Endothelial cell of umbilical vein (primary cell): ENCODE measurements at regions of chr1 and their contacts with region 1.

Region 1: GRCh38 chr1:10507111-10507879 is 32.5 kb downstream of the PEX14 start:
- DNase-seq: peak; percentile 49
- H3K4me3 ChIP-seq: no peak overlapping the region
- H3K27ac ChIP-seq: no peak overlapping the region
- H3K4me1 ChIP-seq: peaks cover 28% of the 10 kb centered on the region
- H3K27me3 ChIP-seq: no peaks in the 10 kb centered on the region
- CTCF ChIP-seq: peak; percentile 83 to 88
- POLR2A ChIP-seq: no peak

Region 2: GRCh38 chr1:10494754-10495474 is 12.4 kb before region 1 on chr1:
- CTCF ChIA-PET with region 1: interaction called, 21 read pairs
- POLR2A ChIA-PET with region 1: no interaction called
- dilution Hi-C with region 1: no loop called
- intact Hi-C with region 1: no loop called
- DNase-seq: peak; percentile 59
- H3K4me3 ChIP-seq: no peak overlapping the region
- H3K27ac ChIP-seq: no peak overlapping the region
- H3K4me1 ChIP-seq: peaks cover 5% of the 10 kb centered on the region
- H3K27me3 ChIP-seq: no peaks in the 10 kb centered on the region
- CTCF ChIP-seq: peak; percentile 92 to 93
- POLR2A ChIP-seq: no peak

Region 3: GRCh38 chr1:10528066-10529014 is 21.0 kb after region 1 on chr1:
- CTCF ChIA-PET with region 1: interaction called, 31 read pairs
- POLR2A ChIA-PET with region 1: no interaction called
- dilution Hi-C with region 1: no loop called
- intact Hi-C with region 1: loop called (anchors 1 kb)
- DNase-seq: peak; percentile 75
- H3K4me3 ChIP-seq: peak overlapping the region in 1 of 3 experiments; percentile 28
- H3K27ac ChIP-seq: peak overlapping the region; percentile 87
- H3K4me1 ChIP-seq: peaks cover 30% of the 10 kb centered on the region
- H3K27me3 ChIP-seq: no peaks in the 10 kb centered on the region
- CTCF ChIP-seq: no peak
- POLR2A ChIP-seq: no peak

Region 4: DNA sequence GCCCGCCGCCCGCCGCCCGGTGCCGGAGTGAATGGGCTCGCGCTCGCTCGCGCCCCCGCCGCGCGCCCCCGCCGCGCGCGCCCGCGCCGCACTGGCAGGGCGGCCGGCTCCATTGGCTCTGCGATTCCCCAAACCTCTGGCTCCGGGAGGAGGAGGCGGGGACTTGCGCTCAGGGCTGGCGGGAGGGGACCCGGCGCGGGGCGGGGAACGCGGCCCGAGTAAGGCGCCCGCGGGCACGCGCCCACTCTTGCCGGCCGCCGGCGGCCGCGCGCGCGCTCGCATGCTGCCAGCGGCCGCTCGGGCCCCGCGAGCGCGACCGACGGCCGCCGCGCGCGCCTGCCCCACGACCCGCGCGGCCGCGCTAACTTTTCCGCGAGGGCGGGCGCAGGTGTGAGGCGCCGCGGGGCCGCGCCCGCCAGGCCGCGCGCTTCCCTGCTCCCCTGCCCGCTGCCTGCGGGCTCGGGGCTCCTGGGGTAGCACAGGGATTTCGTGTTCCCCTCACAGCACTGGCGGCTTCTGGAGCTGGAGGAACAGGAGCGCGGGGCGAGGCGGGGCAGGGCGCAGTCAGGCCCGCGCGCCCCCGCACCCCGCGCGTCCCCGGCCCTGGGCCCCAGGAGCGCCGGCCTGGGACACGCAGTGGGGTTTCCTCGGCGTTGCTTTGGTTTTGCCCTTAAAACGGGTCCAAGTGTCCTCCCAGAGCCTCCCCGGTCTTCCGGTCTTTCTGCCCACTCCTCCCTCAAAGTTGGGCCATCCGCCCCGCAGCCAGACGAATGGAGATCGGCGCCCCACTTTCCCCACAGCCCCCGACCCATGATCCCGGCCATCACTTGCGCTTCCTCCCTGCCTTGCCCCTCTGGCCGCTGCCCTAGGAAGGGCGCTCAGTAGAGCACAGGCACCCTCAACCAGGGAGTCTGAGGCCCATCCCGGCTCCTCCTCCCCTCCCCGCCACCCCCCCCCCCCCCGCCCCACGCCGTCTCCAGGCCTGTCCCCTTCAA is 187.6 kb after region 1 on chr1:
- CTCF ChIA-PET with region 1: no interaction called
- POLR2A ChIA-PET with region 1: no interaction called
- dilution Hi-C with region 1: no loop called
- intact Hi-C with region 1: loop called (anchors 2 kb)
- DNase-seq: peak; percentile 77
- H3K4me3 ChIP-seq: peak overlapping the region; percentile 28 to 51 (median 31)
- H3K27ac ChIP-seq: no peak overlapping the region
- H3K4me1 ChIP-seq: no peaks in the 10 kb centered on the region
- H3K27me3 ChIP-seq: peaks cover 2 to 3% of the 10 kb centered on the region in 2 experiments
- CTCF ChIP-seq: no peak
- POLR2A ChIP-seq: no peak

Region 5: DNA sequence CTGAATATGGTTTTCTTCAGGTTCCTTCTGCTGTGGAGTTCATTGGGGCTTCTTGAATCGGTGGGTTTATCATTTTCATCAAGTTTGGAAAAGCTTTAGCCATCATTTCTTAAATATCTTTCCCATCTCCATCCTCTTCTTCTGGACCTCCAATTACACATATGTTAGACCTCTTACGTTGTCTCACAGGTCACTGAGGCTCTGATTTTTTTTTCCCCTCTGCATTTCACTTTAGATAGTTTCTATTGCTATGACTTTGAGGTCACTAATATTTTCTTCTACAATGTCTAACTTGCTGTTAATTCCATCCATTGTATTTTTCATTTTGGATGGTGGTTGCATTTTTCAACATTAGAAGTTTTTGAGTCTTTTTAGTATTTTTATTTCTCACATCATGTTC is 336.4 kb after region 1 on chr1:
- CTCF ChIA-PET with region 1: no interaction called
- POLR2A ChIA-PET with region 1: no interaction called
- dilution Hi-C with region 1: no loop called
- intact Hi-C with region 1: loop called (anchors 1 kb)
- DNase-seq: no peak
- H3K4me3 ChIP-seq: no peak overlapping the region
- H3K27ac ChIP-seq: no peak overlapping the region
- H3K4me1 ChIP-seq: no peaks in the 10 kb centered on the region
- H3K27me3 ChIP-seq: peaks cover 1 to 3% of the 10 kb centered on the region in 2 experiments
- CTCF ChIP-seq: no peak
- POLR2A ChIP-seq: no peak

Region 6: DNA sequence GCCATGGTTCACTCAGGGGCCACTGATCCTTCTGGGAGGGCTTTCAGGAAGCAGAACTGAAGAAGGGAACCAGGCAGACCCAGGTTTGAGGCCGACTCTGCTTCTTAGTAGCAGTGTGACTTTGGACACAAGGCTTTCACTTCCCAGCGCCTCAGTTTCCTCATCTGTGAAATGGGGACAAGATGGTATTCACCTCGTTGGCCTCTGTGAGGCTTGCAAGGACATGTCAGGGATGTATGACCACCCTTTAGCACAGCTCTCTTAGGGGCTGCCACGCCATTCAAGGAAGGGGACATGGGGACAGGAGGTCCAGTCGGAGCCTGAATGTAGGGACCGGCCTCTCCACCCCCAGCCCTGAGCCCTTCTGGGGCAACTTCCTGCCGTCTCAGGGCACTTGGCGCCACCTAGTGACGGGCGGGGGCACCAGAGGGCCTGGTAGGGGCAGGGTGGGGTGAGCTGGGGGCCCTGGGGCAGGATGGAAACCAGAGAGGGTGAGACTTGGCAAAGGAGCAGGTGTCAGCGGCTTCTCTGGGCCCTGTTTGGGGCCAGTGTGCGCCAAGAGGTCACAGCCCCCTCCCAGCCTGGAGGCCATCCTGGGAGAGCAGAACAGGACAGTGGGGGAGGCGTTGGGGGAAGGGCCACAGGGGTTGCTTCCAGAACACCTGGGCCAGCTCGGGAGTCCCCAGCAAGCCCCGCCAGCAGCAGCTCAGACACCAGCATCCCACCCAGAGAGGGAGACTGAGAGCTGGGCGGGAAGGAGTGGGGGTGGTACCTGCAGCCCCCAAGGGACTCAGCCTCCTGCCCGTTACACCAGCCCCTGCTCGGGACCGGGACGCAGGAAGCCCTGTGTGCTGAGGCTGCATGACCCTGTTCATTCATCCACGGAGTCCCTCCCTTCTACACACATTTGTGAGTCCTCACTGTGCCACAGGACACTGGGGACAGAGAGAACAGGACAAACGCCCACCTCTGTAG is 402.7 kb after region 1 on chr1:
- CTCF ChIA-PET with region 1: interaction called, 12 read pairs
- POLR2A ChIA-PET with region 1: no interaction called
- dilution Hi-C with region 1: no loop called
- intact Hi-C with region 1: loop called (anchors 1 kb)
- DNase-seq: peak; percentile 4
- H3K4me3 ChIP-seq: no peak overlapping the region
- H3K27ac ChIP-seq: no peak overlapping the region
- H3K4me1 ChIP-seq: no peaks in the 10 kb centered on the region
- H3K27me3 ChIP-seq: peaks cover 0 to 2% of the 10 kb centered on the region in 2 experiments
- CTCF ChIP-seq: peak; percentile 18 to 45
- POLR2A ChIP-seq: no peak

Region 7: DNA sequence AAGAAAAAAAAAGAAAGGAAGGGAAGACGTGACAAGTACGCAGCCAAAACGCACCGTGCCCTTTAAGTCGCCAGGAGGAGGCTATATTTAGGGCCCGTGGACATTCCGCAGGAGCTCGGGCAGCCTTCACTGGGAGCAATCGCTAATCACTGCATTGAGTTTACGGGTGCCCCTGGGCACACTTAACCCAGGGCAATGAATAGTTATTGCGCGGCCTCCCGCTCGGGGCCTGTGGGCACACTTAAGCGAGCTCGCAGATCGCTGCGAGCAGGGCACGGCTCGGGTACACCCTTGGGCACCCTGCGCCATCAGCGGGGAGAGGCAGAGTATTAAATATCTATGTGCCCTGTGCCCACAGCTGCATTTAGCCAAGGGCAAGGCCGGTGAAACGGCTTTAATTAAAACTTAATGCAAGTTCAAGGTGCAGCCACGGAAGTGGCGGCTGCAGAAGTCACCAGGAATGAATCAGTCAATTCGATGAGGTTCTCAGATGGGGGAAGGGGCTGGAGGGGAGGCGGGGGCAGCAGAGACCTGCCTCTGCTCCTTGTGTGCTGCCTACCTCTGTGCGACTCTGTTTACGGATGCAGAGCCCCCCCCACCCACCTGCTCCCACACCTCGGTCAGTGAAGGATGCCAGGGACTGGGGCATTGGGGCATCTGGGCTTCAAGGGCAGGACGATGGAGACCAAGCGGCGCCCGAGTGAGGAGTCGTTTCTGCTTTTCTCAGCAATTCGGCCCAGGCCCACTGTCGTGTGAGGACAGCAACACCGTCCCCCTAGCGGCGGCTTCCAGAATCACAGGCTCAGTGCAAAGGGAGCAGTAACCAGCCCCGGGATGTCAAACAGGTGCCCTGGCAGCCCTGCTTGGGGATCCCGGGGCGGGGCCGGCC is 453.4 kb after region 1 on chr1:
- CTCF ChIA-PET with region 1: interaction called, 6 read pairs
- POLR2A ChIA-PET with region 1: no interaction called
- dilution Hi-C with region 1: no loop called
- intact Hi-C with region 1: loop called (anchors 5 kb)
- DNase-seq: peak; percentile 58
- H3K4me3 ChIP-seq: no peak overlapping the region
- H3K27ac ChIP-seq: no peak overlapping the region
- H3K4me1 ChIP-seq: no peaks in the 10 kb centered on the region
- H3K27me3 ChIP-seq: no peaks in the 10 kb centered on the region
- CTCF ChIP-seq: peak; percentile 81 to 97
- POLR2A ChIP-seq: no peak